ENCODE measurements at regions of chr10 and their contacts with region 1.

Region 1: DNA sequence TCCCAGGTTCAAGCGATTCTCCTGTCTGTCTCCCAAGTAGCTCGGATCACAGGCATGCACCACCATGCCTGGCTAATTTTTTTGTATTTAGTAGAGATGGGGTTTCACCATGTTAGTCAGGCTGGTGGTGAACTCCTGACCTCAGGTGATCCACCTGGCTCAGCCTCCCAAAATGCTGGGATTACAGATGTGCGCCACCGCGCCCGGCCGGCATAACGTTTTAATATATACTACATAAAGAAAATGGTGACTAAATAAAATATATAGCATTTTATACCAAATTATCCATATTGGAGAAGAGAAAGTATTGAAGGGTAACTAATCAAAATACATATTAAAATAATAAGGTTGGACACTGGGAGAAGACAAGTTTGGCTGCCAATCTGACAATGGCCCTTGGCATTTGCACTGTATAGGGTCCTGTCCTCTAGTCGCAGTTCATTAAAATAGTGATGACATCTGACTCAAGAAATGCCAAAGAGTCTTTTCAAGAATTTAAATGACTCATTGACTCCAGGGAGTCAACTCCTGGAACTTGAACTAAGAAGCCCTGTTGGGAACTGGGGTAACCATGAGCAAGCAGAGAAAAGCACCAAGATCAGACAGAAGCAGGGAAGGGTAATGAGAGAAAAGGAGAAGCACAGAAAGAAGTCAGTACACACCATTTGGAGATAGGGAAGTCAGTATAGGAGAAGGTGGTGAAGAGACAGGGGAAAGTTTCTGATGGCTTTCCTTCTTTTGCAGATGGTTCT is 91.1 kb downstream of the CH25H start:
- DNase-seq: peak; percentile 56
- H3K4me3 ChIP-seq: peak overlapping the region in 1 of 3 experiments; percentile 46
- H3K27ac ChIP-seq: peak overlapping the region; percentile 90
- H3K4me1 ChIP-seq: peaks cover 43% of the 10 kb centered on the region
- H3K27me3 ChIP-seq: no peaks in the 10 kb centered on the region
- CTCF ChIP-seq: no peak
- POLR2A ChIP-seq: no peak

Region 2: DNA sequence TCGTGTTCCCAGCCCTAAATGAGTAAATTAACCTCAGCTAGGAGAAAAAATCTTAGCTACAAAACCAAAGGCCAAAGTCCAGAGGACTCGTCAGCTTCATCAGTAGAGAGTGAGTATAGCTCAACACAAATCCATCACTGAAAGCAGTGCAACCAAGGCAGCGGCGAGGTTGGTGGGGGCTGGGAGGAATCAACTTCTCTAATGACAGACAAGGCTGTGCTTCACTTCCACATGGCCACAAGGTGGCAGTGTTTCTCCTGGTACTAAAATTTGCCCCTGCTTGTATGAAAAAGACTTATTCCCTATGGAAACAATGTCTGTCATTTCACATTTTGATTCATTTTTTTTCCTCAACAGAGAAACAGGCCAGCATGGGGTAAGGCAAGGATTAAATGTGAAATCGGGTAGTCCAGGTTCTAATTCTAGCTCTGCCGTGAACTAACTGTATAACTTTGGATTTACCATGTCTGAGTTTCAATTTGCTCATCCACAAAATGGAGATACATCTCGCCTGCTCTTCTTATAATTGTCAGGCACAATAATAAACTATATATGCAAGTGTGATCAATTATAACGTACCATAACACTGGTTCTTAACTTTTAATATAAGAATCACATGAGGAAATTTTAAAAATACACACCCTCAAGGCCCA is 86.1 kb before region 1 on chr10:
- CTCF ChIA-PET with region 1: interaction called, 4 read pairs
- POLR2A ChIA-PET with region 1: no interaction called
- dilution Hi-C with region 1: no loop called
- intact Hi-C with region 1: loop called (anchors 1 kb)
- DNase-seq: peak; percentile 79
- H3K4me3 ChIP-seq: no peak overlapping the region
- H3K27ac ChIP-seq: no peak overlapping the region
- H3K4me1 ChIP-seq: peaks cover 19% of the 10 kb centered on the region
- H3K27me3 ChIP-seq: peaks cover 0 to 2% of the 10 kb centered on the region in 2 experiments
- CTCF ChIP-seq: peak; percentile 66 to 84
- POLR2A ChIP-seq: no peak

Region 3: DNA sequence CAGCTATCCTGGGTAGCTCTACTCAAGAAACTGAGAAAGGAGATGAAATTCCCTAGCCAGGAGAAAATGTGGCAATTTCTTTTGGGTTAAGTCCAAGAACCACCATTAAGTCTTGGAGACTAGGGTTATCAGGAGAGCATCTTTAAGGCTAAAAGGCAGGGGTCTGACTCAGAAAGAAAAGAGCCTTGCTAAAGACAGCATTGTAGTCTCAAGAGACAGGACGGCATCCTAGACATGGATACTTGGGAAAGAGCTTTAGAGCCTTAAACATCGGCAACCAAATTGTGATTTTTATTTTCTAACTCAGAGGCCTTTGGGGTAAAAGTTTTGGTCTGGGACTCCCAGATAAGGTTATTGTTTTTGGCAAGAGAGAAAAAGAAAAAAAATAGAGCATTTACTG is 42.3 kb before region 1 on chr10:
- CTCF ChIA-PET with region 1: no interaction called
- POLR2A ChIA-PET with region 1: no interaction called
- dilution Hi-C with region 1: no loop called
- intact Hi-C with region 1: loop called (anchors 2 kb)
- DNase-seq: no peak
- H3K4me3 ChIP-seq: no peak overlapping the region
- H3K27ac ChIP-seq: peak overlapping the region; percentile 60
- H3K4me1 ChIP-seq: peaks cover 23% of the 10 kb centered on the region
- H3K27me3 ChIP-seq: no peaks in the 10 kb centered on the region
- CTCF ChIP-seq: no peak
- POLR2A ChIP-seq: no peak

Region 4: DNA sequence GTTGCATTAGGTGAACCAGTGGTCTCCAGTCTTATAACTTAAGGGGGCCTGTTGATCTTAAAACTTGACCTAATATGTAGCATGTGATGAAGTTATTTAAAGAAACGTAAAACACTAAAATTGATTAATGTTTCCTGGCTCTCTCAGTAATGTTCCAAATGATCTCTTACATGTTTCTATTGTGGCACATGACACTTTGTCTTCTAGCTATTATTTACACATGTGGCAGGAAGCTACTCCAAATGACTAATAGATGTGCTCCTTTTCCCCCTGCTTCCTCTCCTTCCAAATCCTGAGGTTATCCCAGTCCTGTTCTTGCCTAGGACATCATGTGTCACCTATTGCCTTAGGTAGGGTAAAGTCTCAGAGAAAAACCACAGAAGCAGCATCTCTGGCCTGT is 36.1 kb before region 1 on chr10:
- CTCF ChIA-PET with region 1: interaction called, 3 read pairs
- POLR2A ChIA-PET with region 1: no interaction called
- dilution Hi-C with region 1: no loop called
- intact Hi-C with region 1: loop called (anchors 2 kb)
- DNase-seq: peak; percentile 64
- H3K4me3 ChIP-seq: no peak overlapping the region
- H3K27ac ChIP-seq: no peak overlapping the region
- H3K4me1 ChIP-seq: peaks cover 33% of the 10 kb centered on the region
- H3K27me3 ChIP-seq: no peaks in the 10 kb centered on the region
- CTCF ChIP-seq: no peak
- POLR2A ChIP-seq: no peak

Region 5: DNA sequence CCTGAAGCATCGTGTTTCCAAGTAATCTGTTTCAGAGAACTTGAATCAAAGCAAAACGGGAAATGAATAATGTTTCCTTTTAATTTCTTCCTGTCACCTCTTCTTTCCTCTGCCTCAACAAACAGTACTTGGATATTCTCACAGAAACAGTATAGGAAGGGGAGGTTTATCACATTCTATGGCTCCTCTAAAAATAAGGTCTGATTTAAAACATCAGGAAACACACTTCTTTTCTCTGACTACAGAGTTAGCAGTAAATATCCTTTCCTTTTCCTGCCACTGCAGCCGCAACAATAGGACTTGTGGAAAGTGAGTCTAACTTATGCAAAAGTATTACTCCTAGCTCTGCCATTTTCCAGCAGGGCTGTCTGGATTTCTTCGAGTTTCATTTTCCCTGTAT is 28.8 kb after region 1 on chr10:
- CTCF ChIA-PET with region 1: interaction called, 3 read pairs
- POLR2A ChIA-PET with region 1: no interaction called
- dilution Hi-C with region 1: no loop called
- intact Hi-C with region 1: loop called (anchors 1 kb)
- DNase-seq: peak; percentile 84
- H3K4me3 ChIP-seq: peak overlapping the region in 1 of 3 experiments; percentile 23
- H3K27ac ChIP-seq: peak overlapping the region; percentile 1
- H3K4me1 ChIP-seq: peaks cover 19% of the 10 kb centered on the region
- H3K27me3 ChIP-seq: no peaks in the 10 kb centered on the region
- CTCF ChIP-seq: no peak
- POLR2A ChIP-seq: no peak

Region 6: DNA sequence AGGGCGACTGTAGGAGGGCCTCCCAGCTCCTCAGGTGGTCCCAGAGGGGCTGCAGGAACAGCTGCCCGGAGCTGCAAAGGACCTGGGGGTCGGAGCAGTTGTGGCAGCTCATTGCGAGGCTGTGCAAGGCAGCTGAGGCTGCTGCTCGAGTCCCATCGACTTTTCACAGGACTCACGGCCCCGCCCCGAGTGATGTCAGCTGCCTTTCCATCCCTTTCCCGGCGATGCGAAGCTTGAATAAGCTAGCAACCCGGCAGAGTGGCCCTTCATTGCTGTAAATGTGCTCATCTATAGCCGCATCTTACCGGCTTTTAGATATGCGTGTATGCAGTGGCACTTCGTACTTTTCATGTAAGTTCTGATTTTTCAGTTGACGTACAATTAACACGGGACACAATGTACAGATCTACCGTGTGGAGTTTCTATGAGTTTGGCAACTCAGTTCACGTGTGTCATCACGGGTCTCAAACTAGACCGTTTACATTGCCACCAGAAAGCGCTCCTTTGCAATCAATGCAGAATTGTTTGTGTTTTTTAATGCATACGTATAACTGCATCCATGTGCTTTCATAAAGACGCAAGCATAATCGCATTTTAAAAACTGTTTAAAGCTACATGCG is 91.2 kb after region 1 on chr10 and contains the start of gene CH25H:
- CTCF ChIA-PET with region 1: no interaction called
- POLR2A ChIA-PET with region 1: no interaction called
- dilution Hi-C with region 1: no loop called
- intact Hi-C with region 1: loop called (anchors 1 kb)
- DNase-seq: peak; percentile 76
- H3K4me3 ChIP-seq: peak within 1 kb of the TSS; percentile 34 to 84 (median 49)
- H3K27ac ChIP-seq: peak within 1 kb of the TSS; percentile 7
- H3K4me1 ChIP-seq: peaks cover 23% of the 10 kb centered on the region
- H3K27me3 ChIP-seq: peaks cover 16 to 27% of the 10 kb centered on the region in 2 experiments
- CTCF ChIP-seq: no peak
- POLR2A ChIP-seq: no peak
- total RNA-seq, gene CH25H: 0.32 TPM in 1 of 2 replicates, not detected in the other

Region 7: DNA sequence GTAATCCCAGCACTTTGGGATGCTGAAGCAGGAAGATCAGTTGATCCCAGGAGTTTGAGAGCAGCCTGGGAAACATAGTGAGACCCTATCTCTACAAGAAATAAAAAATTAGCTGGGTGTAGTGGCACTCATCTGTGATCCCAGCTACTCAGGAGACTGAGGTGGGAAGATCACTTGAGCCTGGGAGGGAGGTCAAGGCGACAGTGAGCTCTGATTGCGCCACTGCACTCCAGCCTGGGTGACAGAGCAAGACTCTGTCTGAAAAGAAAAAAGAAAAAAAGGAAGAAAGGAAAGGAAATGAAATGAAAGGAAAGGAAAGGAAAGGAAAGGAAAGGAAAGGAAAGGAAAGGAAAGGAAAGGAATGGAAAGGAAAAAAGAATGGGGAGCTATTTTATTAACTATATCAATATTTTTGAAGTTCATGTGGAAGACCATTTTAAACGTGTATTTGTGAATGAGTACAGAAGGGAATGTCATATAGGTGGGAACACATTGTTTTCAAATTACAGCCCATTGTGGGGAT is 178.7 kb after region 1 on chr10:
- CTCF ChIA-PET with region 1: no interaction called
- POLR2A ChIA-PET with region 1: no interaction called
- dilution Hi-C with region 1: no loop called
- intact Hi-C with region 1: no loop called
- DNase-seq: no peak
- H3K4me3 ChIP-seq: no peak overlapping the region
- H3K27ac ChIP-seq: no peak overlapping the region
- H3K4me1 ChIP-seq: no peaks in the 10 kb centered on the region
- H3K27me3 ChIP-seq: peaks cover 30 to 35% of the 10 kb centered on the region in 2 experiments
- CTCF ChIP-seq: no peak
- POLR2A ChIP-seq: no peak

Region 8: DNA sequence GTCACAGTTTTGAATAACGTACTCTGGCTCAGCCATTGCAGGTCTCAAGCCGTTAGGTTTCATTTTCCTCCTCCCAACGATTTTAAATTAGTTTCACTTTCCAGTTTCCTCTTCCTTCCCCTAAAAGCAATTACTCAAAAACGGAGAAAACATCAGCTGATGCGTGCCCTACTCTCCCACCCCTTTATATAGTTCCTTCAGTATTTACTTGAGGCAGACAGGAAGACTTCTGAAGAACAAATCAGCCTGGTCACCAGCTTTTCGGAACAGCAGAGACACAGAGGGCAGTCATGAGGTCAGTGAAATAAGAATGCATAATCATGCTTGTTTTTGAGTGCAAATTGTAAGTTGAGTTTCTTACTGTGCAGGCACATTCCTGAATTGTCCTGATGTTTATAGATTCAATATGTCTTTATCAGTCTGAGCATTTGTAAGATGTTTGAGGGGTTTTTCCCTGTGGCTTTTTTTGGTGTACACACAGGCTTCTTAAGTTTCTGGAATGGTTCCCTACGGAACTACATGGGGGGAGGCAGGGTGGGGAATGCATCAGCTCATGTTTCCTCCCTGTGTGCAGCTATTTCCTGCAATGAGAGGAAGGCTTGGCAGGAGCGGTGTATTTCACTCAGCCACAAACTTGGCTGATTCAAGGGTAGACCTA is 211.9 kb after region 1 on chr10 and contains the start of gene IFIT3:
- CTCF ChIA-PET with region 1: no interaction called
- POLR2A ChIA-PET with region 1: no interaction called
- dilution Hi-C with region 1: no loop called
- intact Hi-C with region 1: loop called (anchors 5 kb)
- DNase-seq: peak; percentile 95
- H3K4me3 ChIP-seq: peak within 1 kb of the TSS; percentile 24 to 80 (median 39)
- H3K27ac ChIP-seq: peak within 1 kb of the TSS; percentile 88
- H3K4me1 ChIP-seq: peaks cover 21% of the 10 kb centered on the region
- H3K27me3 ChIP-seq: no peaks in the 10 kb centered on the region
- CTCF ChIP-seq: no peak
- POLR2A ChIP-seq: peak; percentile 19
- total RNA-seq, gene IFIT3: 2.6 and 3.1 TPM in 2 replicates